ENCODE measurements at regions of chr19 and their contacts with region 1.

Region 1: GRCh38 chr19:39843919-39844793 is 2.0 kb downstream of the FBL start:
- DNase-seq: no peak
- ATAC-seq: no peak
- H3K4me3 ChIP-seq: peak overlapping the region; percentile 98
- H3K27ac ChIP-seq: peak overlapping the region; percentile 85
- H3K4me1 ChIP-seq: peaks cover 32% of the 10 kb centered on the region
- H3K27me3 ChIP-seq: no peaks in the 10 kb centered on the region
- CTCF ChIP-seq: peak; percentile 61

Region 2: DNA sequence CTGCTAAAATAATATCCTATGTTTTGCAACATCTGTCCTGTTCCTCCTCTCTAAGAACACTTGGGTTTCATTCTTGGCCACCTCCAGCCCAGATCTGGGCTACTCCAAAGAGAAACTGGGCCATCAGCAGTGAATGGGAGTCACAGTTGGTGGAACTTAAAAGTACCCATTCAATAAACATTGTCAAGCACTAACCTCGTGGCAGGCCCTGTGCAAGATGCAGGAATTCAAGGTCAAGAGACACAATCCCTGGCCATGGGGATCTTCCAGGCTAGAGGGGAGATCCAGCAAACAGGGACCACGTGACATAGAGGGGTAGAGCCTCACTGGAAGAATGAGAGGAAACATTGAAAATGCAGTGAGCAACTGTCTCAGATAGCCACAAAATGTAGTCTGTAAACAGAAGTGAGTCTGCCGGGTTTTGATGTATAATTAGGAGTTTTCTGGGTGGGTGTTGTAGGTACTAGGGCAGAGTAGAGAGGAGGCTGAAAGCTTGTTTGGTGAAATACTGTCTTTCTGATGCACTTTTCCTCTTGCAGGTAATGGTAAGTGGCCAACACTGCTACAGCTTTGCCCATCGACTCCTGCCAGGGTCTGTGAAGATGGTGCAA is 289.4 kb before region 1 on chr19:
- intact Hi-C with region 1: loop called (anchors 5 kb)
- DNase-seq: no peak
- ATAC-seq: no peak
- H3K4me3 ChIP-seq: no peak overlapping the region
- H3K27ac ChIP-seq: no peak overlapping the region
- H3K4me1 ChIP-seq: peaks cover 7% of the 10 kb centered on the region
- H3K27me3 ChIP-seq: no peaks in the 10 kb centered on the region
- CTCF ChIP-seq: no peak

Region 3: GRCh38 chr19:39679056-39679790 is 164.9 kb before region 1 on chr19:
- intact Hi-C with region 1: loop called in 1 of 2 experiments (anchors 5 kb)
- DNase-seq: peak; percentile 25 to 60
- ATAC-seq: peak; percentile 86 to 93 (median 87)
- H3K4me3 ChIP-seq: peak overlapping the region; percentile 69
- H3K27ac ChIP-seq: peak overlapping the region; percentile 92
- H3K4me1 ChIP-seq: peaks cover 24% of the 10 kb centered on the region
- H3K27me3 ChIP-seq: no peaks in the 10 kb centered on the region
- CTCF ChIP-seq: no peak

Region 4: DNA sequence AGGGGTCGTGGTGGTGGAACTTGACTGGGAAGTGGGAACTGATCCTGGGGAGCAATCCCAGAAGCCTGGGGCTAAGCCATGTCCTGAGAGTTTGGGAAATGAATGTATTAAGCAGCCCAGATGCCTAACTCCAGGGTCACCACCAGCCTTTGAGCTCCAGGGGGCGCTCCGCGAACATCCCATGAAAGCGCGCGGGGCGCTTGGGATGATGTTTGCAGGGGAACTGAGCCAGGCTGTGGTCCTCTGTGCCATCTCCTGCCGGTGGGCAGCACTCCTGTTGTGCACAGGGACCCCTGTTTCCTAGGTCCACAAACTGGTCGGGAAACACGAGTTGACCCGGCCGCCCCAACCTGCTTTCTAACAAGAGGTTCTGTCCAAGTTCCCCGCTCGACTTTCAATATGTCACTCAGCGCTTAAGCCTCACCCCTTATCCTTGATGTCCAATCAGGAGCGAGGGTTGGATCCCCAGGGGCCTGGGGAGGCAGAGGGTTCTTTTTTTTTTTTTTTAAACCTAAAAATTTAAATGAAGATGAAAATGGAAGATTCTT is 51.1 kb before region 1 on chr19:
- intact Hi-C with region 1: loop called (anchors 1 to 2 kb)
- DNase-seq: peak; percentile 82 to 87
- ATAC-seq: peak; percentile 95 to 99 (median 98)
- H3K4me3 ChIP-seq: peak overlapping the region; percentile 77
- H3K27ac ChIP-seq: no peak overlapping the region
- H3K4me1 ChIP-seq: no peaks in the 10 kb centered on the region
- H3K27me3 ChIP-seq: no peaks in the 10 kb centered on the region
- CTCF ChIP-seq: peak; percentile 92

Region 5: GRCh38 chr19:39970675-39971379 is 126.7 kb after region 1 on chr19 and contains the start of gene PSMC4:
- intact Hi-C with region 1: loop called in 1 of 2 experiments (anchors 2 kb)
- DNase-seq: peak; percentile 97 to 99
- ATAC-seq: peak; percentile 98 to 99 (median 99)
- H3K4me3 ChIP-seq: peak within 1 kb of the TSS; percentile 82
- H3K27ac ChIP-seq: peak within 1 kb of the TSS; percentile 94
- H3K4me1 ChIP-seq: peaks cover 17% of the 10 kb centered on the region
- H3K27me3 ChIP-seq: no peaks in the 10 kb centered on the region
- CTCF ChIP-seq: peak; percentile 64
- total RNA-seq, gene PSMC4: 76.0 to 154 (median 104) TPM

Measured in psoas muscle (tissue), 8 donors.